ENCODE measurements at regions of chr7 and their contacts with region 1.

Region 1: GRCh38 chr7:28296571-28297483 is 115.5 kb upstream of the CREB5 start:
- H3K4me3 ChIP-seq: no peak overlapping the region
- H3K27ac ChIP-seq: no peak overlapping the region
- H3K4me1 ChIP-seq: peaks cover 12% of the 10 kb centered on the region
- CTCF ChIP-seq: no peak

Region 2: GRCh38 chr7:28280516-28280915 is 16.3 kb before region 1 on chr7:
- CTCF ChIA-PET with region 1: interaction called, 11 read pairs
- POLR2A ChIA-PET with region 1: no interaction called
- H3K4me3 ChIP-seq: no peak overlapping the region
- H3K27ac ChIP-seq: no peak overlapping the region
- H3K4me1 ChIP-seq: no peaks in the 10 kb centered on the region
- CTCF ChIP-seq: no peak

Region 3: DNA sequence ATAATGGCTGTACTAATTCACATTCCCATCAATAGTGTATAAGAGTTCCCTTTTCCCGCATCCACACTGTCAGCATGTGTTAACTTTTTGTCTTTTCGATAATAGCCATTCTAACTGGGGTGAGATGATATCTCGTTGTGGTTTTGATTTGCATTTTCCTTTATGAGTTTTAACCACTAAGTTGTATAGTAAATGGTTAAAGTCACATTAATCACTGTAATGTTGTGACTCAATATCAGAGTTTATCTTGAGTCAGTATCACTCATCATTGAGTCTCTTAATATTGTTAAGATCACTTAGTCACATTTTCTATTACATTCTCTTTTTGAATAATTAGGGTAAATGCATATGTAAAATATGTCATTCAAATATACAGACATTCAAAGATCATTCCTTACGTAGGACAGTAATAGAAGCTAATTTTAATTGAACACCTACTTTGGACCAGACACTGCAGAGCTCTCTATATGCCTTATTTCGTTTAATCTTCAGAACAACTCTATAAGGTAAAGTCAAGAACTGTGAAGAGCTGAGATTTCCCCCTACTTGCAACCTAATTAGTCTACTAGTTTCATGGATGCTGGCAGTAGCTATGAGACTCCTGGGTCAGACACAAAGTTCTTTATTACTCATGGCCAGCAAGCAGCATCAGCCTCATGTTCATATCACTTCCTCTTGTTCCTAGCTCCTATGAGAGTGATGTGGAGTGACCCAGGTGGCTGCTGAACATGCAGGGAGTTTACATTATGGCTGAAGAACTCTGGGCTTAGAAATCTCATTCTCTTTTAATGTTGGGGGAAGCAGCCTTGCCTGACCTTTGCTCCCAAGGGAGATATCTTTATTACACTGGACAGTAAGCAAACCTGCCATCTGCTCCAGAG is 146.0 kb after region 1 on chr7:
- CTCF ChIA-PET with region 1: no interaction called
- POLR2A ChIA-PET with region 1: no interaction called
- H3K4me3 ChIP-seq: no peak overlapping the region
- H3K27ac ChIP-seq: no peak overlapping the region
- H3K4me1 ChIP-seq: no peaks in the 10 kb centered on the region
- CTCF ChIP-seq: no peak

Region 4: DNA sequence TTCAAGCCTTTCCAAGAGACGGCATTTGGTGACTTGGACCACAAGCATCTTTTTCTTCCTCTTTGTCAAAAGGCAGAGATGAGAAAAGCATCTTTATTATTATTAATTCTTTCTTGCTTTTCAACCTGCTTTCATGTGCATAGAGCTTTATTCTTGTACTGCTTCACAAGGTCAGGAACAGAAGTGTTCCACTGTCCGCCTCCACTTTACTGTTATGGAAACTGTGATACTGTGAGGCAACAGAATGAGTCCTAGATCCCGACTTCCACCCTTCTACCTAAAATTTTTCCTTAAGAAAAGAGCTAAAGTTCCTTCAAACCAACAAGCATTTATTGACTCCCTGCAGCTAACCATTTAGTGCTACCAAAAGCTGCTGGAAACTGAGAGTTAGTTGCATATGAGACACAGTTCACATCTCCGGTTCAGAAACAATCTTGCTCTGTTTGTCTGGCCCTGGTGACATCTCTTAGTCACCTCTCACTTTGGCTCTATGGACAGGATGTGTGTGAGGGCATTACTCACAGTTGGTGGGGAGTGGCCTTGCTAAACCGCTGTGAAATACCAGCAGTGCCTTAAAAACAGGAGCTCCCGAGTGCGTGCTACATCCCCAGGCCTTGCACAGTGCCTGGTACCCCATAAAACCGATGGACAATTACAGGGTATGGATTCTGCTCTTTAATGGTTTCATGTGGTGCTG is 738.4 kb after region 1 on chr7:
- CTCF ChIA-PET with region 1: no interaction called
- POLR2A ChIA-PET with region 1: no interaction called
- H3K4me3 ChIP-seq: no peak overlapping the region
- H3K27ac ChIP-seq: no peak overlapping the region
- H3K4me1 ChIP-seq: no peaks in the 10 kb centered on the region
- CTCF ChIP-seq: no peak